Activated T-helper 2 cell treated with anti-CD3 and anti-CD28 coated beads, Interferon-gamma antibody, Interleukin-2, Interleukin-4, amounts not matched to agents 10 μg/mL and 5 μg/mL and 100 μg/mL, durations not matched to agents 14 hours and 24 hours and 36 hours (primary cell): ENCODE measurements at regions of chr3 and their contacts with region 1.

Region 1: DNA sequence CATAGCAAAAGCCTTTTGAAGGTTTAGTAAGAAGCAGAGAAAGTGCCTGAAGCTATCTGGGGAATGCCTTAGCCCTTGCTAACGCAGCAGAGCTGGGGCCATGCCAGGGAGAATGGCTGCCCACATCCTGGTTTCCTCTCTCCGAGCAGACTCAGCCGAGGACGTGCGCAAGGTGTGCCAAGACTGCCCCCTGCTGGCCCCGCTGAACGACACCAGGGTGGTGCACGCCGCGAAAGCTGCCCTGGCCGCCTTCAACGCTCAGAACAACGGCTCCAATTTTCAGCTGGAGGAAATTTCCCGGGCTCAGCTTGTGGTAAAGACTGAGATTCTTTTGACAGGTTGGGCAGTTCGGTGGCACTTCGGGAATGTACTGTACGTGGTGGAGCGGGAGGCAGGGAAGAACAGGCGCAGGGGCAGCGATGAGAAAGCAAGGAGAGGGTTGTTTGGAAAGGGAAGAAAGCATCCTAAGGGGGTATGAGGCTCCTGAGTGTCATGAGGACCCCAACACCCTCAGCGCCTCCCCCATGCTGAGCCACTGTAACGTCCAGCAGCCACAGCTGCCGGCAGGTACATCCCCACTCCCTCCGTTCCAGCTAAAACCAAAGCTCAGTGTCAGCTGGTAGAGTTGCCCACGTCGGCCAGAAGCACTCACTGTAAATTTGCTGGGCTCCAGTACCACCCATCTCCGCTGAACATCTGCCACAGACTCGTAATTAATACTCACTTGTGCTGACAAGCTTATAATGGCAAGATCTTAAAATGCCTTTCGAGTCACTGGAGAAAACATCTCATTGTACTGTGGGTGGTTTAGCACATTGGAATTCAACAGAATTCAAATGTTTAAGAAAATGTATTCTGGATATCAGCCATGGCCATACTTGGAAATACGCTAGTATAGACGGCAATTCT is 4.4 kb downstream of the AHSG start:
- DNase-seq: peak; percentile 77
- H3K4me3 Mint-ChIP-seq: peak overlapping the region; percentile 61
- H3K27ac Mint-ChIP-seq: peak overlapping the region; percentile 50
- H3K4me1 Mint-ChIP-seq: peaks cover 13% of the 10 kb centered on the region
- H3K27me3 Mint-ChIP-seq: peaks cover 43% of the 10 kb centered on the region

Region 2: DNA sequence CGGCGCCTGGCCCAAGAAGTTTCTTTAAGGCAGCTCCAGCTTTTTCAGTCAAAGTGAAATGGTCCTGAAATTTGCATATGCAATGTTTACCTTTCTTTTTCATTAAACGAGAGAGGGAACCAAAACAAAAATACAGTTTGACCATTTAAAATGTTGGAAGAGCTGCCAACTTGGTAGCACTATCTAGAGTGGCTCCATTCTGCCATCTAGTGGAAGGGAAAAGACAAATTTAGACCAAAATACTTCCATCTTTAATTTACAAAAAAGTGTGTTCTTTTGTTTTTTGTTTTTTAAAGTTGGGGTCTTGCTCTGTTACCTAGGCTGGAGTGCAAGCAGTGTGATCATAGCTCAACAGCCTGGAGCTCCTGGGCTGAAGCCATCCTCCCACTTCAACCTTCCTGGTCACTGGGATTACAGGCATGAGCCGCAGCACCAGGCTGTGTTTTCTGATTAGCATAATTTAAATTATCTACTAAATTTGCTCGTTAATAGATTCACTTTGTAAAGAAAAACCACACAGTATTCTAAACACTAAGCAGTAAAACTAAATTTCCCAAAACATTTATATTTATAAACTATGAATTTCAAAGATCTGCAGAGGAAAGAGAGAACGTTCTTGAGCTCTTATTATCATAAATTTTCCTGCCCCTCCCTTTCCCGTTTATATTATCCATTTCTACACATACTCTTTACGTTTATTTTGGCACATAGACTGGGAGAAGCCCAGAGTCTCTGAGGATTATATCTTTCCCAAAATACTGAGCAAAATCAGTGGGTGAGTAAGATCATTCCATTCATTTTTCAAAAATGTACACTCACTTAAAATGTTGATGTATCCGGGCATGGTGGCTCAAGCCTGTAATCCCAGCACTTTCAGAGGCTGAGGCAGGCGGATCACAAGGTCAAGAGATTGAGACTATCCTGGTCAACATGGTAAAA is 204.4 kb after region 1 on chr3:
- intact Hi-C with region 1: loop called (anchors 1 kb)
- DNase-seq: no peak
- H3K4me3 Mint-ChIP-seq: no peak overlapping the region
- H3K27ac Mint-ChIP-seq: no peak overlapping the region
- H3K4me1 Mint-ChIP-seq: peaks cover 19% of the 10 kb centered on the region
- H3K27me3 Mint-ChIP-seq: no peaks in the 10 kb centered on the region